Endothelial cell of umbilical vein (primary cell): ENCODE measurements at regions of chr12 and their contacts with region 1.

Region 1: DNA sequence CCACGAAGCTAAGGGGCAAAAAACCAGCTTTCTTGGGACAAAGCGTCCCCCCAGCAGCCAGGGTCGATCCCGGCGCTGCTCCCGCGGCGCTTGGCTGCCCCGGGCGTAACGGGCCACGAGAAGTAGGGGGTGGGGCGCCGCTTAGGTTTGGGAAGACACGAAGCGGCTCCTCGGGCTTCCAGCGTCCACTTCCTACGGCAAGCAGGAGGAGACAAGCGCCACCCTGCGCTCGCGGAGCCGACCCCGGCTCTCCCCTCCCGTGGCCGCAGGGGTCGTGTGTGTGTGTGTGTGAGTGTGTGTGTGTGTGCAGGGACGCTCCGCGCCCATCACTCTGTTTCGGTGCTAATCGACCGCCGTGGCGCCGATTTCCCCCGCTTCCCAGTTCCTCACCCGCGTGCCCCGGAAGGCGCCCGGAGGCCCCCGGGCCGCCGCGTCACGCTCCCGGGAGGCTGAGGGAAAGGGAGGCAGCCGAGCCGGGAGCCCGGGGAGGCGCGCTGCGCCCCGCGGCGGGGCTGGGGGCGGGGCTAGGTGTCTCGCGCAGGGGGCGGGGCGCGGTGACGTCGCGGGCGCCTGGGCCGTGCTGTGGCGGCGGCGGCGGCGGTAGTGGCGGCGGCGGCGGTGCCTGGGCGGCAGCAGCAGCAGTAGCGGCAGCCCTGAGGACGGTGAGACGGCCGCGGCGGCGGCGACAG is at the start of gene ERC1:
- DNase-seq: peak; percentile 82
- H3K4me3 ChIP-seq: peak within 1 kb of the TSS; percentile 80 to 94 (median 80)
- H3K27ac ChIP-seq: peak within 1 kb of the TSS; percentile 80
- H3K4me1 ChIP-seq: peaks cover 25% of the 10 kb centered on the region
- H3K27me3 ChIP-seq: no peaks in the 10 kb centered on the region
- CTCF ChIP-seq: peak in 1 of 2 donors; percentile 9
- POLR2A ChIP-seq: peak; percentile 60
- total RNA-seq, gene ERC1: 60.0 and 66.1 TPM in 2 replicates

Region 2: GRCh38 chr12:614411-614970 is 376.3 kb before region 1 on chr12:
- CTCF ChIA-PET with region 1: no interaction called
- POLR2A ChIA-PET with region 1: no interaction called
- dilution Hi-C with region 1: no loop called
- intact Hi-C with region 1: no loop called
- DNase-seq: peak; percentile 45
- H3K4me3 ChIP-seq: no peak overlapping the region
- H3K27ac ChIP-seq: no peak overlapping the region
- H3K4me1 ChIP-seq: peaks cover 23% of the 10 kb centered on the region
- H3K27me3 ChIP-seq: no peaks in the 10 kb centered on the region
- CTCF ChIP-seq: peak in 1 of 2 donors; percentile 48
- POLR2A ChIP-seq: no peak

Region 3: DNA sequence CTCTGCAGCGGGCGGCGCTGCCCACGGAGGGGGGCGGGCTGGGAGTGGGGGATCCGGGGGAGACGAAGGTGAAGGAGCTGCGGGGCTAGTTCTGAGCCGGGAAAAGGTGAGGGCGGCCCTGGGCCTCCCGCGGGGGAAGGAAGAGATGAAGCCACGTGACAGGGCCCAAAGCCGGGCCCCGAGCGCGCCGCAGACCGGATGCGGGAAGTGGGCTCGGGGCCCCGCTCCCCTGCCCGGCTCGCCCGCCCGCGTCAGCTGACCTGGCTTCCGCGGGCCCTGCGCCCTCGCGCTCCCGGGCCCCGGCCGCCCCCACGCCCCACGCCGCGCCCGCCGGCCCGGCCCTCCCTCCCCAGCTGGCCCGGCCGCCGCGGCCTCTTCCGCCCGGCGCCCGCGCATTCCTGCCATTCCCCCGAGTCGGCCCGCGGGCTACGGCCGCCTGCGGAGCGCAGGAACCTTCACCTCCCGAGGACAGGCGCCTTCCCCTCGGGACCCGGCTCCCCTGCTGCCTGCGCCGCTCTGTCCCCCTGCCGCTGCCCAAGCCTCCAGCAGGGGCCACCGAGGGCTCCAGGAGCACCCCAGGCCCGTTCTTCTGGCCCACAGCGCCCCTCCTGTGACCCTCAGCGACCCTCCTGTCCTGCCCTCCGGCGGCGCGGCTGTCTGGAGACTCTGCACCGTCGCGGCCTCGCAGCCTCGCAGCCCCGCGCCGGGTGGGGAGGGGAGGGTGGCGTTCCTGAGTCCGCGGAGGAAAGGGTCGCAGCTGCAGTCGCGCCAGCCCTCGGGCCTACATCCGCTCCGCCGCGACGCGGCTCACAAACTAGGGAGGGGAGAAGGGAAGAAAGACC is 348.0 kb before region 1 on chr12:
- CTCF ChIA-PET with region 1: no interaction called
- POLR2A ChIA-PET with region 1: no interaction called
- dilution Hi-C with region 1: no loop called
- intact Hi-C with region 1: loop called (anchors 5 kb)
- DNase-seq: peak; percentile 52
- H3K4me3 ChIP-seq: peak overlapping the region in 1 of 3 experiments; percentile 40
- H3K27ac ChIP-seq: peak overlapping the region; percentile 87
- H3K4me1 ChIP-seq: peaks cover 41% of the 10 kb centered on the region
- H3K27me3 ChIP-seq: no peaks in the 10 kb centered on the region
- CTCF ChIP-seq: peak; percentile 1 to 35
- POLR2A ChIP-seq: peak; percentile 66

Region 4: DNA sequence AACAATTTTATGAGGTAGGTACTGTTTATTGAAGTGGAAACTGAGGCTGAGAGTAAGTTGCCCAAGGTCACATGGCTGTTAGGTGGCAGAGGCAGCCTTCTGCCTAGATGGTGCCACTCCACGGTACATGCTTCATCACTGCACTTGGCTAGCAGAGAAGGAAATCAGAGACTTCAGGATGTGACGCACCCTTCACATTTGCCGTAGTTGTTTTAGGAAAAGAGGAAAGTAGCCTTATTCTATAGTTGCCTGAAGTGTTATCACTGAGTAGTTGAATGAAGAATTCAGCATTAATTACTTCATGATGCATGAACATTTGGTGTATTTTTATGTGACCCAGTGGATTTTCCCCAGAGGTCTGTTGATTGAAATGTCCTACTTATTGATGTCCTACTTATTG is 55.9 kb after region 1 on chr12:
- CTCF ChIA-PET with region 1: interaction called, 3 read pairs
- POLR2A ChIA-PET with region 1: no interaction called
- dilution Hi-C with region 1: no loop called
- intact Hi-C with region 1: loop called (anchors 1 kb)
- DNase-seq: peak; percentile 83
- H3K4me3 ChIP-seq: no peak overlapping the region
- H3K27ac ChIP-seq: peak overlapping the region; percentile 68
- H3K4me1 ChIP-seq: peaks cover 52% of the 10 kb centered on the region
- H3K27me3 ChIP-seq: no peaks in the 10 kb centered on the region
- CTCF ChIP-seq: no peak
- POLR2A ChIP-seq: no peak